Heart left ventricle (tissue), 16 donors: ENCODE measurements at regions of chr15 and their contacts with region 1.

Region 1: DNA sequence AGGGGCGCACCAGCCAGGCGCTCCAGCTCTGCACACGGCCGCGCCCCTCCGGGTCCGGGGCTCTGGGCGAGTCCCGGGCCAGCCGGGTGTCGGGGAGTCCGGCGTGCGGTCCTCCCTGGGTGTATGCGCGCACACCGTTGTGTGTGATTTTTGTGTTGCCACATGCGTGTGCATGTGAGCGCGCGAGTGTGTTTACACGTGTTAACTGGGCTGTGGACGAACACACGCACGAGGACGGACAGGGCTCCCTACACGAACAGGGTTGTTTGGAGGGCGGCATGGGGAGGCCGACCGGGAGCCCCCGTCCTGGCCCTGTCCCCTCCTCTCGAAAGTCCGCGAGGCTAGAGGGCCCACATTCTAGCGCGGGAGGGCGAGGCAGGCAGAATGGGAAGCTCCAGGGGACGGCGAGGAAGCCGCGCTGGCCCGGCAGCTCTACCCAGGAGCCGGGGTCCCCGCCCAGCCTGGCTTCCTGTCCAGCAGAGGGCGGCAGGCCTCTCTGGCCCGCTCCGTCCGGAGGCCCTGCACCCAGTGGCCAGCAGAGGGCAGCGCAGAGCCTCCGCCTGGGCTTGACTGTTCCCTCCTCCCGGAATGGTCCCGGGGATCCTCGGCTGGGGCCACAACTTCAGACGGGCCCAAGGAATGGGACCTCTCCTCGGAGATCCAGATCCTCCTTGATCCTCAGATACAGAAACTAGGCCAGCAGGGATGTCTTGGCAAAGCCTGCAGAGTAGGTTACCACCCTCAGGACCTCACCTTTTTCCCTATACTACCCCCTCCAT is 611 bp upstream of the LINGO1 start:
- DNase-seq: peak; percentile 89 to 95 (median 90)
- ATAC-seq: peak; percentile 86 to 97 (median 94)
- H3K4me3 ChIP-seq: peak overlapping the region; percentile 40 to 65 (median 56)
- H3K27ac ChIP-seq: peak overlapping the region in 6 of 12 donors; percentile 5 to 65 (median 51)
- H3K4me1 ChIP-seq: peaks cover 0 to 37% (median 11%) of the 10 kb centered on the region in 12 donors
- H3K27me3 ChIP-seq: peaks cover 5 to 54% (median 30%) of the 10 kb centered on the region in 9 donors
- CTCF ChIP-seq: peak; percentile 100
- POLR2A ChIP-seq: no peak

Region 2: GRCh38 chr15:77107531-77108355 is 525.6 kb before region 1 on chr15:
- intact Hi-C with region 1: loop called in 4 of 10 experiments (anchors 5 to 10 kb)
- DNase-seq: peak in 4 of 5 donors; percentile 43 to 56 (median 49)
- ATAC-seq: peak; percentile 55 to 71 (median 70)
- H3K4me3 ChIP-seq: no peak overlapping the region
- H3K27ac ChIP-seq: peak overlapping the region in 9 of 12 donors; percentile 45 to 67 (median 58)
- H3K4me1 ChIP-seq: peaks cover 0 to 60% (median 36%) of the 10 kb centered on the region in 12 donors
- H3K27me3 ChIP-seq: no peaks in the 10 kb centered on the region
- CTCF ChIP-seq: peak; percentile 44 to 78 (median 61)
- POLR2A ChIP-seq: no peak

Region 3: DNA sequence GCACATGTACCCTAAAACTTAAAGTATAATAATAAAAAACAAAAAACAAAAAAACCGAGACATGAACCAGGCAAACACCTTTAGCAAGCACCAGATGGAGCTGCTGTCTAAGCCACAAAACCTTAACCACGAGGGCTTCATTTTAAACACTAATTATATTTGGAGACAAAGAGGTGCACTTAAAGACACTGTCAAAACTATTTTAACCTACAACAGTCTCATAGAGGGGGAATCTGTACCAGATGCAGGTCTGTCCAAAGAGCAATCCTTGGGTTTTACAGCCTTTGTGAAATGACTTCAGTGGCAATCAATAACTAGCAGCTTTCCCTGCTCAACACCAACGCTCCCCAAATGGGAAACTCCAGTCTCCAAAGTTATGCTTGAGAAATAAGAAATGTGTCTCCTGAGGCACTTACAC is 446.7 kb before region 1 on chr15:
- intact Hi-C with region 1: loop called in 4 of 10 experiments (anchors 5 to 10 kb)
- DNase-seq: no peak
- ATAC-seq: peak in 3 of 4 donors; percentile 24 to 53 (median 33)
- H3K4me3 ChIP-seq: no peak overlapping the region
- H3K27ac ChIP-seq: peak overlapping the region; percentile 42 to 93 (median 86)
- H3K4me1 ChIP-seq: peaks cover 3 to 66% (median 49%) of the 10 kb centered on the region in 12 donors
- H3K27me3 ChIP-seq: no peaks in the 10 kb centered on the region
- CTCF ChIP-seq: peak; percentile 40 to 76 (median 64)
- POLR2A ChIP-seq: no peak

Region 4: DNA sequence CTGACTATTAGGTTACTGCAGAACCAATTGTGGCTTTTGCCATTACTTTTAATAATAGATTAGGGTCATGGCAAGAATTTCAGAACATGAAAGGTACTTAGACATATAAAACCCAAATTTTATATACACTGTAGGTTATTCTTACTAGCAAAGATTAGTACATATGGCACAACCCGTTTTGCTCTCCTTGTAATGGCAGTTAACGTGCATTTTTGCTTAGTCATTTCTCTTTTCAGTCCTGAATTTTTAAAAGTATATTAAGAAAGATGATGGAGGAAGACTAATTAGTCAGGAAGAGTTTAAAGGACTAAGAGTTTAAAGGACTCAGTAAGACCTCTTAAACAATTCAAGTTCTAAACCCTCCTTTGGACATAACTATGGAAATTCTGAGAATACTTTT is 327.4 kb before region 1 on chr15:
- intact Hi-C with region 1: no loop called
- DNase-seq: no peak
- ATAC-seq: no peak
- H3K4me3 ChIP-seq: no peak overlapping the region
- H3K27ac ChIP-seq: no peak overlapping the region
- H3K4me1 ChIP-seq: peaks cover 0 to 38% (median 16%) of the 10 kb centered on the region in 12 donors
- H3K27me3 ChIP-seq: no peaks in the 10 kb centered on the region
- CTCF ChIP-seq: no peak
- POLR2A ChIP-seq: no peak

Region 5: GRCh38 chr15:77810130-77810571 is 176.8 kb after region 1 on chr15:
- intact Hi-C with region 1: loop called in 2 of 10 experiments (anchors 5 kb)
- DNase-seq: peak in 1 of 5 donors; percentile 20
- ATAC-seq: peak in 1 of 4 donors; percentile 43
- H3K4me3 ChIP-seq: no peak overlapping the region
- H3K27ac ChIP-seq: no peak overlapping the region
- H3K4me1 ChIP-seq: no peaks in the 10 kb centered on the region
- H3K27me3 ChIP-seq: peaks cover 0 to 10% (median 0%) of the 10 kb centered on the region in 9 donors
- CTCF ChIP-seq: no peak
- POLR2A ChIP-seq: no peak

Region 6: GRCh38 chr15:77821188-77821958 is 188.1 kb after region 1 on chr15:
- intact Hi-C with region 1: loop called (anchors 1 to 5 kb)
- DNase-seq: peak; percentile 44 to 75 (median 48)
- ATAC-seq: peak; percentile 37 to 88 (median 76)
- H3K4me3 ChIP-seq: no peak overlapping the region
- H3K27ac ChIP-seq: no peak overlapping the region
- H3K4me1 ChIP-seq: peaks cover 0 to 23% (median 0%) of the 10 kb centered on the region in 12 donors
- H3K27me3 ChIP-seq: peaks cover 26 to 59% (median 34%) of the 10 kb centered on the region in 9 donors
- CTCF ChIP-seq: peak; percentile 40 to 76 (median 62)
- POLR2A ChIP-seq: no peak

Region 7: DNA sequence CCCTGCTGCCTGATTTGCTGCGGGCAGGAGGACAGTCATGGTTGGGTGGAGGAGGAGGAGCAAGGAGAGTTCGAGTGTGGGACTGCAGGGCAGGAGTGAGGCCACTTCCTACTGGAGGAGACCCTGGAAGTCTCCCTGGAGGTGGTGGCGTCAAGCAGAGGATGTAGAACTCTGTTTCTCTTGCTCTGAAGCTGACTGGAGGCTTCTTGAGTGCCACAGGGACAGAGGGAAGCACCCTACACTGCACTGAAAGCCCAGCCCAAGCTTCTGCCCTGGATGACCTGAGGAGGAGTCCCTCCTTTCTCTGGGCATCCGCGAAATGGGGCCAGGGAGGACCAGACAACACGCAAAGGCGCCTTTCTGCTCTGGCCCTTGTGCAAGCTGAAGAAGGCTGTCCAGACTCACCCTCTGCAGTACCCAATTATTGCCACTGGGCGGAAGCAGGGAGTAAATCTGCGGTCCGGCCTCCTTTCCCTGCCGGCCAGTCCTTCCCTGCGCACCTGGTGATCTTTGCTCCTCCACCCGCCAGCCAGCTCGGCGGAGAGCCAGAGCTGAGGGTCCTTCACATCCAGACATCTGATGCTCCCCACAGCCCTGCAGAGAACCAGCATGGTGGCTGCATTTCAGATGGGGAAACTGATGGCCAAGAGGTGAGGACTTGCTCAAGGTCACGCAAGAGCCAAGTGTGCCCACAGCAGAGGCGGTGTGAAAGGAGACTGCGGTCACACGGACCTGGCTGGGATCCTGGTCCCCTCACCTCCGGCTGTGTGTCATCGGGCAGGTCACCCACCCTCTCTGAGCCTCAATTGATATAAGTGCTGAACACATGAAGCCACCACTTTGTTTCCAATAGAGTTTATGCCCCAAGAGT is 237.1 kb after region 1 on chr15:
- intact Hi-C with region 1: loop called in 1 of 10 experiments (anchors 5 kb)
- DNase-seq: peak; percentile 50 to 70 (median 61)
- ATAC-seq: peak in 3 of 4 donors; percentile 55 to 77 (median 60)
- H3K4me3 ChIP-seq: no peak overlapping the region
- H3K27ac ChIP-seq: no peak overlapping the region
- H3K4me1 ChIP-seq: peaks cover 0 to 4% (median 0%) of the 10 kb centered on the region in 12 donors
- H3K27me3 ChIP-seq: no peaks in the 10 kb centered on the region
- CTCF ChIP-seq: peak; percentile 67 to 89 (median 84)
- POLR2A ChIP-seq: no peak